Activated B cell treated with CpG ODN at 0.5 μM for 24 hours (primary cell): ENCODE measurements at regions of chrX and their contacts with region 1.

Region 1: GRCh38 chrX:71283403-71284143 is at the start of gene NONO:
- DNase-seq: peak; percentile 53
- ATAC-seq: peak; percentile 87
- H3K4me3 Mint-ChIP-seq: peak within 1 kb of the TSS; percentile 99
- H3K27ac Mint-ChIP-seq: peak within 1 kb of the TSS; percentile 99
- H3K4me1 Mint-ChIP-seq: peaks cover 18% of the 10 kb centered on the region
- H3K27me3 Mint-ChIP-seq: no peaks in the 10 kb centered on the region
- CTCF ChIP-seq: no peak
- total RNA-seq, gene NONO: 398 and 462 TPM in 2 replicates

Region 2: GRCh38 chrX:71095543-71095911 is 188.0 kb before region 1 on chrX and contains the start of gene FOXO4:
- CTCF ChIA-PET with region 1: no interaction called
- POLR2A ChIA-PET with region 1: interaction called, 3 read pairs
- intact Hi-C with region 1: loop called (anchors 2 kb)
- DNase-seq: peak; percentile 72
- ATAC-seq: peak; percentile 90
- H3K4me3 Mint-ChIP-seq: peak within 1 kb of the TSS; percentile 95
- H3K27ac Mint-ChIP-seq: peak within 1 kb of the TSS; percentile 93
- H3K4me1 Mint-ChIP-seq: peaks cover 26% of the 10 kb centered on the region
- H3K27me3 Mint-ChIP-seq: no peaks in the 10 kb centered on the region
- CTCF ChIP-seq: no peak
- total RNA-seq, gene FOXO4: 10.1 and 16.1 TPM in 2 replicates

Region 3: GRCh38 chrX:71118032-71118984 is 165.3 kb before region 1 on chrX and contains the start of gene MED12:
- CTCF ChIA-PET with region 1: no interaction called
- POLR2A ChIA-PET with region 1: interaction called, 7 read pairs
- intact Hi-C with region 1: loop called (anchors 2 kb)
- DNase-seq: peak; percentile 76
- ATAC-seq: peak; percentile 96
- H3K4me3 Mint-ChIP-seq: peak within 1 kb of the TSS; percentile 85
- H3K27ac Mint-ChIP-seq: peak within 1 kb of the TSS; percentile 89
- H3K4me1 Mint-ChIP-seq: peaks cover 16% of the 10 kb centered on the region
- H3K27me3 Mint-ChIP-seq: no peaks in the 10 kb centered on the region
- CTCF ChIP-seq: no peak
- total RNA-seq, gene MED12: 81.7 and 102 TPM in 2 replicates

Region 4: GRCh38 chrX:71254092-71254941 is 29.3 kb before region 1 on chrX and contains the start of gene ZMYM3:
- CTCF ChIA-PET with region 1: interaction called, 4 read pairs
- POLR2A ChIA-PET with region 1: interaction called, 77 read pairs
- intact Hi-C with region 1: loop called (anchors 1 kb)
- DNase-seq: peak; percentile 64
- ATAC-seq: peak; percentile 85
- H3K4me3 Mint-ChIP-seq: peak within 1 kb of the TSS; percentile 93
- H3K27ac Mint-ChIP-seq: peak within 1 kb of the TSS; percentile 87
- H3K4me1 Mint-ChIP-seq: peaks cover 21% of the 10 kb centered on the region
- H3K27me3 Mint-ChIP-seq: no peaks in the 10 kb centered on the region
- CTCF ChIP-seq: no peak
- total RNA-seq, gene ZMYM3: 27.9 and 28.2 TPM in 2 replicates

Region 5: GRCh38 chrX:71298119-71298518 is 14.5 kb after region 1 on chrX:
- CTCF ChIA-PET with region 1: no interaction called
- POLR2A ChIA-PET with region 1: no interaction called
- intact Hi-C with region 1: no loop called
- DNase-seq: no peak
- ATAC-seq: no peak
- H3K4me3 Mint-ChIP-seq: no peak overlapping the region
- H3K27ac Mint-ChIP-seq: no peak overlapping the region
- H3K4me1 Mint-ChIP-seq: no peaks in the 10 kb centered on the region
- H3K27me3 Mint-ChIP-seq: no peaks in the 10 kb centered on the region
- CTCF ChIP-seq: no peak

Region 6: GRCh38 chrX:71532753-71533425 is 249.3 kb after region 1 on chrX and contains the start of gene OGT:
- CTCF ChIA-PET with region 1: no interaction called
- POLR2A ChIA-PET with region 1: interaction called, 13 read pairs
- intact Hi-C with region 1: no loop called
- DNase-seq: peak; percentile 77
- ATAC-seq: peak; percentile 82
- H3K4me3 Mint-ChIP-seq: peak within 1 kb of the TSS; percentile 96
- H3K27ac Mint-ChIP-seq: peak within 1 kb of the TSS; percentile 93
- H3K4me1 Mint-ChIP-seq: peaks cover 24% of the 10 kb centered on the region
- H3K27me3 Mint-ChIP-seq: no peaks in the 10 kb centered on the region
- CTCF ChIP-seq: no peak
- total RNA-seq, gene OGT: 223 and 272 TPM in 2 replicates